Mammary epithelial cell (primary cell): ENCODE measurements at regions of chr21 and their contacts with region 1.

Region 1: GRCh38 chr21:43639470-43640178 is 19.7 kb downstream of the HSF2BP start:
- DNase-seq: peak; percentile 69
- H3K4me3 ChIP-seq: no peak overlapping the region
- H3K27ac ChIP-seq: no peak overlapping the region
- H3K4me1 ChIP-seq: peaks cover 9% of the 10 kb centered on the region
- H3K27me3 ChIP-seq: no peaks in the 10 kb centered on the region
- CTCF ChIP-seq: no peak

Region 2: DNA sequence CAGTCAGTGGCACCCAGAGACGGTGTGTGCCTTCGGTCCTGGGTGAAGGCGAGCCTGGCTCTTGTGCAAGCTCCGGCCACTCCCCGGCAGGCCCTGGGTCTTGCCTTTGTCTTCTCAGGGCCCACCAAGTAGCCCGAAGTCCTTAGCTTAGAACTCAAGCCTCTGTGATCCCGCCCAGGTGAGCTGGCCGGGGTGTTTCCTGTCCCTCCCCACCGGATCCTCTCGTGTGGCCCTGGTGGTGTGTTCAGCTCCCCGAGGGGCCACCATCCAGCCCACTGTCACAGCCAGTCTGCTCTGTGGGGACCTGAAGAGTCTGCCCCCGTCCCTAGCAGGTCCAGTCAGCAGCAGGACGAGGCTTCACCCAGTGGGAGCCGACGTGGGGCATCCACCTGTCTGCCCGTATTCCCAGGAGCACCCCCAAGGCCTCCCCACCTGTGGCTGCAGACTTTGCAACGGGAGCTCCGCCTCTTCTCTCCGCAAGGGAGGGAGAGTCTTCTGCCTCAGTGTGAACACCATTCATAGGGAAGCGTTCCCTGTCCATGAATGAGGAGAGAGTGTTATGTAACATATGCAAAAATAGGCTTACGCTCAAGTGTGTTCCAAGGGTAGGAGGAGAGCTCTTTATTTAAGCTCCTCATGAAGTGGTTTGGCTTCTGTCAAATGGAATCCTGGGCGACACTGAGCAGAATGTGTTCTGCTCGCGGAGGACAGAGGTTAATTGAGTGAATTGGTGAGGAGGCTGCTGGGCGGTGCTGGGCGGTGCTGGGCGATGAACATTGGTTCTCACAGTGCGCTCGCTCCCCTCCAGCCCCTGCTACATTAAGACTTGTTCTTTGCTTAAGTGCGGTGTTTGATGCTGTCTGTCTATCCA is 361.9 kb before region 1 on chr21:
- CTCF ChIA-PET with region 1: no interaction called
- dilution Hi-C with region 1: no loop called
- in situ Hi-C with region 1: no loop called
- intact Hi-C with region 1: no loop called
- DNase-seq: no peak
- H3K4me3 ChIP-seq: no peak overlapping the region
- H3K27ac ChIP-seq: no peak overlapping the region
- H3K4me1 ChIP-seq: no peaks in the 10 kb centered on the region
- H3K27me3 ChIP-seq: no peaks in the 10 kb centered on the region
- CTCF ChIP-seq: no peak

Region 3: DNA sequence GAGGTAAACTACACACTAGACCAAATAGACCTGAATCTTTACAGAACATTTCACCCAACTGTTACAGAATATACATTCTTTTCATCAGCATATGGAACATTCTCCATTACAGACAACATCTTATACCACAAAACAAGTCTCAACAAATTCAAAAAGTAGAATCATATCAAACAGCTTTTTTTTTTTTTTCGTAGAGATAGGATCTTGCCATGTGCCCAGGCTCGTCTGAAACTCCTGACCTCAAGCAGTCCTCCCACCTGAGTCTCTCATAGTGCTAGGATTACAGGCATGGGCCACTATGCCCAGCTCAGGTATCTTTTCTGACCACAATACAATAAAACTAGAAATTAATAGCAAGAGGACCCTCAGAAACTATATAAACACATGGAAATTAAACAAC is 16.8 kb before region 1 on chr21:
- CTCF ChIA-PET with region 1: no interaction called
- dilution Hi-C with region 1: no loop called
- in situ Hi-C with region 1: no loop called
- intact Hi-C with region 1: loop called (anchors 1 kb)
- DNase-seq: peak; percentile 84
- H3K4me3 ChIP-seq: no peak overlapping the region
- H3K27ac ChIP-seq: peak overlapping the region; percentile 29
- H3K4me1 ChIP-seq: peaks cover 16% of the 10 kb centered on the region
- H3K27me3 ChIP-seq: no peaks in the 10 kb centered on the region
- CTCF ChIP-seq: no peak